Endothelial cell of umbilical vein (primary cell): ENCODE measurements at regions of chr4 and their contacts with region 1.

Region 1: DNA sequence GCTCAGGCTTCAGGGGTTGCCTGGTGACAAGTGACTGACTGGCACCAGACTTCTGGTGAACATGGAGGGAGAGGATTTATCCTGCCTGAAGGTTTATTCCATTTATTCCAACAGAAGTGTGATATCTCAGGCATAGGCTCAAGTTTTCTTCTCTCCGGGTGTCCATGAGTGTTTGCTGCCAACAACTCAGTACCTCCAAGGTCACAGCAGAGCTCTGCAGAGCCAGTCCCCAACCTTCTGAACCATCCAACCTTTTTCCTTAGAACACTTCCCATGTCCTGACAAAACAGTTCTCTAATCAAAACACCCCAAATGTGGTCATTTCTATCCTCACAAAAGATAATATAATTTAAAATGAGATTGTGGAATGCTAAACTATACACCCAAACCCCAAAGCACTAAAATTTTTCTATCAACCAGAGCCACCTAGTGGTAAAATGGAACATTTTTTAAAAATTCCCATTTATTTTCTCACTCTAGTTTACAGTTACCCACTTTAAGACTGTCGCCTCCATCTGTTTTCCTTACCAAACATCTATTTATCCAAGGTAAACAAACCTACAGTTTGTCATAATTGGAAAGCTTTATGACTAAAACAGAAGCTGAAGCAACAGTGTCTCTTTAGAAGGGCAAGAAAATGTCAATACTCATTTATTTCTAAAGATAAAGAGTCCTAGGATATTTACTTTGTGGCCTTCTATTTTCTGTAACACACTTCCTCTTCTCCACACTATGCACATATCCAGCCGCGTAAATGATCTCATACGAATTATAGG is 39.6 kb downstream of the TMEM154 start:
- DNase-seq: peak; percentile 30
- H3K4me3 ChIP-seq: no peak overlapping the region
- H3K27ac ChIP-seq: no peak overlapping the region
- H3K4me1 ChIP-seq: no peaks in the 10 kb centered on the region
- H3K27me3 ChIP-seq: no peaks in the 10 kb centered on the region
- CTCF ChIP-seq: peak in 1 of 2 donors; percentile 29
- POLR2A ChIP-seq: no peak

Region 2: DNA sequence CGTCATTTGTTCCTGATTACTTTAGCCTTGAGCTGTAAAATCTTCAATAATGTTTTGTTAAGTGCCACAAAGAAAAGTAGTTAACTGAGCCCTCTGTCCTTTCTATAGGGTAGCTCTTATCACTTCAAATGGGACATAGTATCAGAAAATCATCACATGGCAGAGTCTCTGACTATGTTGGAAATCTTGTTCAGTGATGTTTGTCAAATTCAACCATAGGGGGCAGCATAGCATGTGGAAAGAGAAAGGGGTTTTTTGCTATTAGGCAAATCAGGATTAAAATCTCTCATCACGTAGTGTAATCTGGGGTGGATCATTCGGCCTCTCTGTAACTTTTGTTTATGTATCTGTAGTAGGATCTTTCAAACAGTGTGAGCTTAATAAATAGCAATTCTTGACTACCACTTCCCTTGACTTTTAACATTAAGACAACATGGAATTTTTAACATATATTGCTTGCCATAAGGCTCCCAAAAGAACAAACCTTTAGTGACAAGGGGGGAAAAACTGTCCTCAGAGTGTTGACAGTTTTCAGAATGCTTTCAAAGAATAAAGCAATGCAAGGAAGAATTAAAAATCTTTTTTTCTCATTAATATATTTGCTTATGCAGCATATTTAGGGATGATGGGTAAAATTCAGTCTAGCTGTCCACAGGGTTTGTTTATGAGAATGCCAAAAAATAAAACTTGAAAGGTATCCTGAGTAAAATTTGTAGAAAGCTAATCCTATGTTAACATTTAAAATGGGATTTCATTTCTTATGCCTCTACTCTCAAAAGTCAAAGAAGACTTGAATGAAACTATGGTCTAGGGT is 231.5 kb before region 1 on chr4:
- CTCF ChIA-PET with region 1: interaction called, 10 read pairs
- POLR2A ChIA-PET with region 1: no interaction called
- dilution Hi-C with region 1: no loop called
- intact Hi-C with region 1: loop called (anchors 2 kb)
- DNase-seq: peak; percentile 42
- H3K4me3 ChIP-seq: no peak overlapping the region
- H3K27ac ChIP-seq: no peak overlapping the region
- H3K4me1 ChIP-seq: no peaks in the 10 kb centered on the region
- H3K27me3 ChIP-seq: no peaks in the 10 kb centered on the region
- CTCF ChIP-seq: peak; percentile 43 to 50
- POLR2A ChIP-seq: no peak

Region 3: GRCh38 chr4:152708362-152708761 is 68.1 kb after region 1 on chr4:
- CTCF ChIA-PET with region 1: no interaction called
- POLR2A ChIA-PET with region 1: no interaction called
- dilution Hi-C with region 1: no loop called
- intact Hi-C with region 1: no loop called
- DNase-seq: no peak
- H3K4me3 ChIP-seq: no peak overlapping the region
- H3K27ac ChIP-seq: no peak overlapping the region
- H3K4me1 ChIP-seq: no peaks in the 10 kb centered on the region
- H3K27me3 ChIP-seq: peaks cover 3 to 5% of the 10 kb centered on the region in 2 experiments
- CTCF ChIP-seq: no peak
- POLR2A ChIP-seq: no peak

Region 4: DNA sequence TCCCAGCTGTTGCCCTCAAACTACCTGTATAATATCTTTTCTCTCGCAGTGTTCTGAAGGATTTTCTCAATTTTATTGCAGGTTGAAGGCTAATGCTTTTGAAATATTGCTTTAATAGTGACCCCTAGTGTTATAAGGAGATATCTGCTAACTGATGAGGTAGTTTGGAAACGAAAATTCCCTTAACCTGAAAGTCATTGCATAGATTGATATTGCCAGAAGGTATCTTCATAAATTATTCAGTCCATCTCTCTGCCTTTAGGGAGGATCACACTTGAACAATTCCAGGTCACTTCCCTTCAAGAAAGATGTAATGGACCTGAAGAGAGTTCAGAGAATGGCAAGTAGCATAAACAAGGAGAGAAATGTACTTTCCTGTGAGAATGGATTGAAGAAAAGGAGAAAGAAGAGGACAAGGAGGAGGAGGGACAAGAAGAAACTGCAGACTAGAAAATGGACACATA is 95.2 kb after region 1 on chr4:
- CTCF ChIA-PET with region 1: no interaction called
- POLR2A ChIA-PET with region 1: no interaction called
- dilution Hi-C with region 1: no loop called
- intact Hi-C with region 1: loop called (anchors 2 kb)
- DNase-seq: peak; percentile 41
- H3K4me3 ChIP-seq: no peak overlapping the region
- H3K27ac ChIP-seq: no peak overlapping the region
- H3K4me1 ChIP-seq: no peaks in the 10 kb centered on the region
- H3K27me3 ChIP-seq: peaks cover 4 to 5% of the 10 kb centered on the region in 2 experiments
- CTCF ChIP-seq: peak; percentile 30 to 36
- POLR2A ChIP-seq: no peak